MCF 10A (cell line): ENCODE measurements at regions of chr4 and their contacts with region 1.

Region 1: DNA sequence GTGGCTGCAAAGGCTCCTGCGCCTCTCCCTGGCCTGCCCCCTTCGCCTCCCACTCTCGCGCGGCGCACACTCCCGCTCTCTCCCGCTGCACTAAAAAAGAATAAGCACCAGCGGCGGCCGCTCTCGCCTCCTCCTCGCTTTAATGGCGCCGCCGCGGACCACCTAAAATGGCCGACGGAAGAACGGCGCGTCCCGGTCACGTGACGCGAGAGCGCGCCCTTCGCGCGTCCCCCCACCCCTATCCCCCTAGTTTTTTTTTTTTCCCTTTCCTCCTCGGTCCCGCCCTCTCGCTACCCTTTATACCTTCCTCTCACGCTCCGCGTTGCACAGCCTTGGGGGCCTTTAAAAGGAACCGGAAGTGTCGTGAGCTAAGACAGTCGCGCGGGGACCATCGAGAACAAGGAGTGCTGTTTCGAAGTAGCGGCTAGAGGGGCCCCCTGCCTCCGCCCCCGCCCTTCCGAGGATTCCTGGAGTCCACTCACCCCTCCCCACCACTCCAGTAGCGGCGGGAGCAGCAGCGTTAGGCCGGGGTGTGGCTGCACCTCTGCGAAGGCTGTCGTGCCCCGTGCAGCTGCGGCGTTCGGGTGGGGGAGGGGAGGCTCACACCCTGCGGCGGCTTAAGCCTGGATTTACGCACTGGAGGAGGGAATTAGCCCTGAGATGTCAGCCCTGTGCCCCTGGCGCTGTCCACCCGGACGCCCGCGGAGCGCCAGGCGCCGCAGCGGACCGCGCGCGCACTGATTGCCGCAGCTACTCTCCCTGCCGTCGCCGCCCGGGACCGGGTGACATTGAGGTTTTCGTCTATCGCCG is at the start of gene HNRNPD:
- DNase-seq: peak; percentile 100
- H3K4me3 Mint-ChIP-seq: peak within 1 kb of the TSS; percentile 100
- H3K27ac Mint-ChIP-seq: peak within 1 kb of the TSS; percentile 100
- H3K4me1 Mint-ChIP-seq: peaks cover 31% of the 10 kb centered on the region
- H3K27me3 Mint-ChIP-seq: no peaks in the 10 kb centered on the region
- CTCF ChIP-seq: no peak
- total RNA-seq, gene HNRNPD: 190 and 308 TPM in 2 replicates

Region 2: DNA sequence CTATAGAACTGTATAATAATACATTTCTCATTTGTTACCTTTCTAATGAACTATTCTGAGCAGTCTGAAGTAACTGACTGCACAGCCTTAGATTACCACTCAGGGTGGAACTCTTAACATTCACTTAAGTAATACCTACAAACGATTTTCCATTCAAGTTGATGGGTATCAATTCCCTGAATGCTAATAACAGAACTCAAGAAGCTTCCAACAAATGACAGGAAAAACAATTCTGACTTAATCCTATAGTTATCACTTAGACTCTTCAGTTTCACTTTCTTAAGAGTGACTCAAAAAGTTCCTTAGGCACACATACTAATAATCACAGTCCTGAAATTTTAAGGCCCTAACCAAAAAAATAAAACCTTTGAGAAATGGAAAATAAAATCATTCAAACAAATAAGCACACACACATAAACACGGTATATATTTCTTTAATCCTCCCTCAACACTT is 21.1 kb before region 1 on chr4:
- CTCF ChIA-PET with region 1: interaction called, 3 read pairs
- POLR2A ChIA-PET with region 1: interaction called, 13 read pairs
- intact Hi-C with region 1: no loop called
- DNase-seq: no peak
- H3K4me3 Mint-ChIP-seq: no peak overlapping the region
- H3K27ac Mint-ChIP-seq: no peak overlapping the region
- H3K4me1 Mint-ChIP-seq: peaks cover 5% of the 10 kb centered on the region
- H3K27me3 Mint-ChIP-seq: no peaks in the 10 kb centered on the region
- CTCF ChIP-seq: no peak

Region 3: GRCh38 chr4:82394910-82395309 is 20.9 kb after region 1 on chr4:
- CTCF ChIA-PET with region 1: interaction called, 4 read pairs
- POLR2A ChIA-PET with region 1: interaction called, 10 read pairs
- intact Hi-C with region 1: no loop called
- DNase-seq: peak; percentile 54
- H3K4me3 Mint-ChIP-seq: no peak overlapping the region
- H3K27ac Mint-ChIP-seq: peak overlapping the region; percentile 0
- H3K4me1 Mint-ChIP-seq: peaks cover 11% of the 10 kb centered on the region
- H3K27me3 Mint-ChIP-seq: no peaks in the 10 kb centered on the region
- CTCF ChIP-seq: no peak

Region 4: GRCh38 chr4:82428969-82429727 is 55.1 kb after region 1 on chr4:
- CTCF ChIA-PET with region 1: interaction called, 38 read pairs
- POLR2A ChIA-PET with region 1: interaction called, 240 read pairs
- intact Hi-C with region 1: loop called (anchors 1 kb)
- DNase-seq: peak; percentile 92
- H3K4me3 Mint-ChIP-seq: peak overlapping the region; percentile 98
- H3K27ac Mint-ChIP-seq: peak overlapping the region; percentile 99
- H3K4me1 Mint-ChIP-seq: peaks cover 20% of the 10 kb centered on the region
- H3K27me3 Mint-ChIP-seq: no peaks in the 10 kb centered on the region
- CTCF ChIP-seq: peak; percentile 96

Region 5: DNA sequence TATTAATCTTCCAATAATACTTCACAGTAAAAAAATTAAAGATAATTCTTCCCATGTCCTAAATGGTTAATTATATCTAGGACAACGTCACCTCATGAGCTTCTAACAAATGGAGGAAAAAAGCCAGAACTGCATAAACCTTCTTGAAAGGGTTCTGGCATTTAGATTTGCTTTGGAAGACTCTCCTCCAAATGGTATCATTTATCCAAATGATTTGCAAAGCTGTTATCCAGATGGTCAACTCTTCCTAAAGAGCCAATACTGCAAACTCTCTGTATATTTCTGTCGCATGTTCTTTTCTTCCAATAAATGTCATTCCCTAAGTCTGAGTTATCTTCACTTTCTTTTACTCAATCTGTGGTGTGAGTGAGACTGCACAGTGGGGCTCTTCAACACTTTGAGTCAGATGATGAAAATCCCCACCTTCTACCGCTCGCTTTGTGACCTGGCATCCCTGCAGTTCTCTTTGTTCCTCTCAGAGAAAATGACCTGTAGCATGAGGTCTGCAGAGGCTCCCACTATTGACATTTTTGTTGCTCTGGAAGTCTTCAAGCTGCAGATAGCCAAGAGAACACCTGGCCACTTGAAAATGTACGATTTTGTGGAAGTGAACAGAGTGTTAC is 134.9 kb after region 1 on chr4:
- CTCF ChIA-PET with region 1: no interaction called
- POLR2A ChIA-PET with region 1: no interaction called
- intact Hi-C with region 1: no loop called
- DNase-seq: no peak
- H3K4me3 Mint-ChIP-seq: no peak overlapping the region
- H3K27ac Mint-ChIP-seq: no peak overlapping the region
- H3K4me1 Mint-ChIP-seq: no peaks in the 10 kb centered on the region
- H3K27me3 Mint-ChIP-seq: no peaks in the 10 kb centered on the region
- CTCF ChIP-seq: no peak

Region 6: DNA sequence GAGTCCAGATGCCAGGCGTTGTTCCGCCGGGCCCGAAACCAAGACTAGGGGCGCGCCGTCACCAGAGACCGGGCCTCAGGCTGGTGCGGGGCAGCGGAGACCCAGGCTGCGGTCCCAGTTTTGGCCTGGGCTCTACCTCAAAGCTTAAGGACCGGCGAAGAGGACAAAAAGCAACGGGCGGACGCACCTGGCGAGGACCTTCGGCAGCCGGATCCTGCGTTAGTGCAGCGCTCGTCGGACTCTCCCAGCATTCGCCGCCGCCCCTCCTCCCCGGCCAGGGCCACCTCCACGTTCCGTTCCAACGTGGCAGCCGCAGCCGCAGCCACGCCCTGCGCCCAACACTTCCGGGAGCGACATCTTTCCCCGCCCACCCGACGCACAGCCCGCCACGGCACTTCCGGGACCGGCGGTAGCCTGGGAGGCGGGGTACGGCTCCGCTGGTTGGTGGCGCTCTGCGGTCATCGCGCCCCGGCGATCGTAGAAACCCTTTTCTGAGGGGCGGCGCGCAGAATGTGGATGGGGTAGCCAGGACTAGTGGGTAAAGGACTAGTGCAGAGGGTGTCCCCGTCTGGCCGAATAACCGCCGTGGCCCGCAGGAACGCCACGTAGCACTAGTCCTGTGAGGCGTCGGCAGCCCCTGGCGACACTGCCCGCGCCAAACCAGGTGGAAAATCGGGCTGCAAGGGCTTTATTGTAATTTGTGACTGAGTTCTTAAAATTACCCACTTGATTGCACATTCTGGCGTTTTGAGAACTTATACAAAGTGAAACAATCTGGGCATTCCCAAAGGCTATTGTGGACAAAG is 517.1 kb after region 1 on chr4 and contains the start of gene SEC31A:
- CTCF ChIA-PET with region 1: interaction called, 4 read pairs
- POLR2A ChIA-PET with region 1: interaction called, 10 read pairs
- intact Hi-C with region 1: no loop called
- DNase-seq: peak; percentile 95
- H3K4me3 Mint-ChIP-seq: peak within 1 kb of the TSS; percentile 86
- H3K27ac Mint-ChIP-seq: peak within 1 kb of the TSS; percentile 98
- H3K4me1 Mint-ChIP-seq: peaks cover 24% of the 10 kb centered on the region
- H3K27me3 Mint-ChIP-seq: no peaks in the 10 kb centered on the region
- CTCF ChIP-seq: no peak
- total RNA-seq, gene SEC31A: 212 and 229 TPM in 2 replicates

Region 7: GRCh38 chr4:83034630-83035494 is 660.8 kb after region 1 on chr4 and contains the start of gene COPS4:
- CTCF ChIA-PET with region 1: no interaction called
- POLR2A ChIA-PET with region 1: interaction called, 9 read pairs
- intact Hi-C with region 1: loop called (anchors 10 kb)
- DNase-seq: peak; percentile 100
- H3K4me3 Mint-ChIP-seq: peak within 1 kb of the TSS; percentile 96
- H3K27ac Mint-ChIP-seq: peak within 1 kb of the TSS; percentile 92
- H3K4me1 Mint-ChIP-seq: peaks cover 8% of the 10 kb centered on the region
- H3K27me3 Mint-ChIP-seq: no peaks in the 10 kb centered on the region
- CTCF ChIP-seq: no peak
- total RNA-seq, gene COPS4: 34.7 and 36.6 TPM in 2 replicates

Region 8: GRCh38 chr4:83128240-83128929 is 754.4 kb after region 1 on chr4:
- CTCF ChIA-PET with region 1: no interaction called
- POLR2A ChIA-PET with region 1: no interaction called
- intact Hi-C with region 1: no loop called
- DNase-seq: peak; percentile 86
- H3K4me3 Mint-ChIP-seq: peak overlapping the region; percentile 1
- H3K27ac Mint-ChIP-seq: peak overlapping the region; percentile 72
- H3K4me1 Mint-ChIP-seq: peaks cover 12% of the 10 kb centered on the region
- H3K27me3 Mint-ChIP-seq: no peaks in the 10 kb centered on the region
- CTCF ChIP-seq: no peak